CD8-positive, alpha-beta memory T cell (primary cell): ENCODE measurements at regions of chr5 and their contacts with region 1.

Region 1: DNA sequence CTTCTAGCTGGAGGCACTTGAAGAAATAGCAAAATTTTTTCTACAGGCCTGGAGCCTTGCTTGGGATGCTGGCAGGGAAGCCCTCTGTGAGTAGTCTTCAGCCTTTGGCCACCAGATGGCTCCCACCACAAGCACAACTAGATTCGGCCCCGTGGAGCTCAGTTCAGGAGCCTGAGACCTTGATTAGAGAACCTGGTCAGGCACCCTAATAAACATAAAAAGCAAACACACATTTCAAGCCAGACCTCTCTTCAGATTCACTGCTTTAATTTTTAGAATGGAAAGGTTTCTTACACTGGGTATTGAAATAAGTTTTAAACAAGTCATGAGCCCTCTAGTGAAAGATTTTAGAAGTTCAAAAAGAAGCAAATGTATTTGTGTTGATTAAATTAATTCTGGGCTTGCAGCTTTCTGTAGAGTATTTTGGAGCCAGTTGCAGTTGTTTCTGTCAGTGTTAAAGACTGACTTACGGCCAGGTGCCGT is 41.4 kb downstream of the GLRX start:
- DNase-seq: peak; percentile 54 to 82 (median 66)
- H3K4me3 ChIP-seq: peak overlapping the region; percentile 14
- H3K4me3 Mint-ChIP-seq: peak overlapping the region; percentile 2 to 83 (median 78)
- H3K27ac ChIP-seq: no peak overlapping the region
- H3K27ac Mint-ChIP-seq: peak overlapping the region in 5 of 8 donors; percentile 6 to 87 (median 51)
- H3K4me1 ChIP-seq: no peaks in the 10 kb centered on the region
- H3K4me1 Mint-ChIP-seq: peaks cover 6 to 14% (median 13%) of the 10 kb centered on the region in 3 donors
- H3K27me3 ChIP-seq: no peaks in the 10 kb centered on the region
- H3K27me3 Mint-ChIP-seq: no peaks in the 10 kb centered on the region

Region 2: GRCh38 chr5:95664204-95664786 is 116.8 kb before region 1 on chr5:
- CTCF ChIA-PET with region 1: interaction called, 15 read pairs
- POLR2A ChIA-PET with region 1: no interaction called
- DNase-seq: peak in 3 of 5 donors; percentile 7 to 17 (median 8)
- H3K4me3 ChIP-seq: no peak overlapping the region
- H3K4me3 Mint-ChIP-seq: no peak overlapping the region
- H3K27ac ChIP-seq: no peak overlapping the region
- H3K27ac Mint-ChIP-seq: no peak overlapping the region
- H3K4me1 ChIP-seq: peaks cover 6% of the 10 kb centered on the region
- H3K4me1 Mint-ChIP-seq: peaks cover 3 to 4% (median 3%) of the 10 kb centered on the region in 3 donors
- H3K27me3 ChIP-seq: no peaks in the 10 kb centered on the region
- H3K27me3 Mint-ChIP-seq: no peaks in the 10 kb centered on the region

Region 3: DNA sequence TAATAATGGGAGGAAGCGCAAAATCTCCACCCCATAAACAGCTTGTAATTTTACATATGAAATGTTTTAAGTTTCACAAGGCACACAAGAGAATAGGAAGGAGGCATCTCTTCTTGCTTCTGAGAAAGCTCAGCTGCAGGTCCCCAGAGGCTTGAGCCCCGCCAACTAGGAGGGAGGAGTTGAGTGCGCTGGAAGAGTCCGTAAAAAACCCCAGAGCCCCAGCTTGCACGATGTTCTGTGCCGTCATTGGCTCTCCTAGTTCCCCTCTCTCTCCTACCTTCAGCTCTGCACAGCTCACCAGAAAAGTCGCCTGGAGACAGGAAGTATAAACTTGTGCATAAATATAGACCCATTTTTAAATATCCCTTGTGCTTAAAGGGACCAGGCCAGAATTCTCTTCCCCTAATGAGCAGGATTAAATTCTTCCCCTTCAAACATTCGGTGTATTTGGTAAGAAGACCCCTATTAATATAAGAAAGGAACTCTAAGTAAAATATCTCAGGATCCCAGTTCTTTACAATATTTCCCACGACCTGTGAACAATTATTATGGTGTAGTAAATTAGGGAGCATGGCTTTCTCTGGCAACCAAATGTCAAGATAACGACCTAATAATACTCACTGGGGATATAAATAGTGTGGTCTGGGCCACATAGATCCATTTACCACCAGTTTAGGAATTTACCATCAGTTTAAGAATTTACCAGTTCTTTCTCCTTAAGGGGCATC is 27.7 kb after region 1 on chr5:
- CTCF ChIA-PET with region 1: interaction called, 45 read pairs
- POLR2A ChIA-PET with region 1: interaction called, 3 read pairs
- DNase-seq: peak; percentile 67 to 90 (median 86)
- H3K4me3 ChIP-seq: peak overlapping the region; percentile 31
- H3K4me3 Mint-ChIP-seq: peak overlapping the region; percentile 20 to 82 (median 71)
- H3K27ac ChIP-seq: peak overlapping the region; percentile 4
- H3K27ac Mint-ChIP-seq: peak overlapping the region; percentile 65 to 96 (median 87)
- H3K4me1 ChIP-seq: peaks cover 57% of the 10 kb centered on the region
- H3K4me1 Mint-ChIP-seq: peaks cover 60 to 65% (median 61%) of the 10 kb centered on the region in 3 donors
- H3K27me3 ChIP-seq: no peaks in the 10 kb centered on the region
- H3K27me3 Mint-ChIP-seq: no peaks in the 10 kb centered on the region

Region 4: DNA sequence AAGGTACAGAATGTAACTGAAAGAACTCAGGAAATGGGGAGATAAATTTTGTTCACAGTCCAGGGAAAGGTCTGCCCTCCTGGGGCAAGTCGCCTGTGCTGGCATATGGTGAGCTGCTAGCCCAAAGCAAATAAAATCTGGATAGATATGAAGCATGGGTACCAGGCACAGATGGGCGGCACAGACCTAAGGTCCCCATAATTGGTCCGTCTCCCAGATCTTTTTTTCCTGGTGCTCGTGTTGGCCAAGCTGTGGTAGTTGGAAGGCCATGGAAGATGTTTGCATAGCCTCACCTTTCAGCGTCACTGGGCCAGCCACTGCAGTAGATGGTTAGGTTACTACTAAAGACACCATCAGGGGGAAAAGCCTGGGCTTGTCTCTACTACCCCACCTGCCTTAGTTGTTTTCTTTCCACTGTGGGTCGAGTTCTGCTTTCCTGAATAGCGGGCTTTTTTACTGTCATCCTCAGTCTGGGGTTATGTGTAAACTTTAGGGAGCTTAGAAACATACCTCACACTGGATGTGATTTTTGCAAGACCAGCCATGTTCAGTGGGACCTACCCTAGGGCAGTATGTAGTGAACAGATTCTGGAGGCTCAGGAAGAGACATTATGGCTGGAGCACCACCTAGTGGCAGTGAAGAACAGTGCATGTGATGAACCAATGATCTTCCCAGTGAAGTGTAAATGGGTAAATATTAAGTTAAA is 65.6 kb after region 1 on chr5:
- CTCF ChIA-PET with region 1: interaction called, 278 read pairs
- POLR2A ChIA-PET with region 1: interaction called, 4 read pairs
- DNase-seq: peak; percentile 48 to 77 (median 64)
- H3K4me3 ChIP-seq: no peak overlapping the region
- H3K4me3 Mint-ChIP-seq: no peak overlapping the region
- H3K27ac ChIP-seq: no peak overlapping the region
- H3K27ac Mint-ChIP-seq: peak overlapping the region in 2 of 8 donors; percentile 27 to 60
- H3K4me1 ChIP-seq: peaks cover 10% of the 10 kb centered on the region
- H3K4me1 Mint-ChIP-seq: peaks cover 12 to 13% (median 13%) of the 10 kb centered on the region in 3 donors
- H3K27me3 ChIP-seq: no peaks in the 10 kb centered on the region
- H3K27me3 Mint-ChIP-seq: no peaks in the 10 kb centered on the region

Region 5: DNA sequence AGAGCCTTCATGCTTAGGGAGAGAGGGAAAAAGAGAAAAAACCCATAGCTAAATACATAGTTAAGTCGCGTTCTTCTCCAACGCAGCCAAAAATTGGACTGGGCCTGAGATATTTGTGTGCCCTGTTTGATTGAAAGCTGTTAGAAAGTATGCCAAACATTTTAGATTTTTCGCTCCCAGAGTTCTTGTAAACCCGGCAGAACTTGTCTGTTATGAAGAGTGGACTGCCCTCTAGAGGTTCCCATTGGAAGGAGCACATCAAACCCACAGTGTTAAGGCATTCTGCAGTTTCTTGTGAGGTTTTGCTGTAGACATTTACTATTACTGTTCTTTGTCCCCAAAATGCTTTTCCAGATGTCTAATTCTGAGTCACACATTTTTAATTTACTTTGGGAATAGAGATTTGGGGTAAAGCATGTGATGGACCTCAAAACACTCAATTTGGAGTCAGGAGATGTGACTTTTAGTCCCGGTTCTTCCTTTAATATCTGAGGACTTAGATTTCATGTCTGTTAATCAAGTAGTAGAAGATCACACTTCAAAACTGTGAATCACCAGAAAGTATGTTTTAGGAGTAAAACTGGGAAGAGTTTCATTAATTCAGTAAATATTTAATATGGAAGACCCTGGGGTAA is 555.3 kb after region 1 on chr5:
- CTCF ChIA-PET with region 1: interaction called, 18 read pairs
- POLR2A ChIA-PET with region 1: no interaction called
- DNase-seq: peak; percentile 20 to 57 (median 51)
- H3K4me3 ChIP-seq: no peak overlapping the region
- H3K4me3 Mint-ChIP-seq: no peak overlapping the region
- H3K27ac ChIP-seq: no peak overlapping the region
- H3K27ac Mint-ChIP-seq: no peak overlapping the region
- H3K4me1 ChIP-seq: no peaks in the 10 kb centered on the region
- H3K4me1 Mint-ChIP-seq: no peaks in the 10 kb centered on the region
- H3K27me3 ChIP-seq: no peaks in the 10 kb centered on the region
- H3K27me3 Mint-ChIP-seq: peaks cover 5 to 27% of the 10 kb centered on the region in 2 donors